GM12878 (cell line): ENCODE measurements at regions of chrX and their contacts with region 1.

Region 1: GRCh38 chrX:7132335-7133049 is 15.0 kb upstream of the STS start:
- DNase-seq: no peak
- ATAC-seq: peak; percentile 93
- H3K4me3 ChIP-seq: no peak overlapping the region
- H3K27ac ChIP-seq: peak overlapping the region; percentile 30
- H3K4me1 ChIP-seq: peaks cover 12% of the 10 kb centered on the region
- H3K27me3 ChIP-seq: no peaks in the 10 kb centered on the region
- CTCF ChIP-seq: peak; percentile 55 to 60 (median 56)
- EP300 ChIP-seq: no peak
- POLR2A ChIP-seq: no peak
- RAD21 ChIP-seq: peak; percentile 66

Region 2: GRCh38 chrX:7119950-7120877 is 12.3 kb before region 1 on chrX:
- CTCF ChIA-PET with region 1: interaction called, 21 read pairs
- POLR2A ChIA-PET with region 1: interaction called, 6 read pairs
- RAD21 ChIA-PET with region 1: interaction called, 6 read pairs
- SMC1A ChIA-PET with region 1: interaction called, 8 read pairs
- in situ Hi-C with region 1: no loop called
- intact Hi-C with region 1: loop called (anchors 2 kb)
- DNase-seq: no peak
- ATAC-seq: peak; percentile 16; the same call in 2 of the 3 replicates
- H3K4me3 ChIP-seq: no peak overlapping the region
- H3K27ac ChIP-seq: peak overlapping the region; percentile 29
- H3K4me1 ChIP-seq: peaks cover 49% of the 10 kb centered on the region
- H3K27me3 ChIP-seq: no peaks in the 10 kb centered on the region
- CTCF ChIP-seq: no peak
- EP300 ChIP-seq: no peak
- POLR2A ChIP-seq: no peak
- RAD21 ChIP-seq: no peak